CD4-positive, alpha-beta T cell (primary cell): ENCODE measurements at regions of chr5 and their contacts with region 1.

Region 1: DNA sequence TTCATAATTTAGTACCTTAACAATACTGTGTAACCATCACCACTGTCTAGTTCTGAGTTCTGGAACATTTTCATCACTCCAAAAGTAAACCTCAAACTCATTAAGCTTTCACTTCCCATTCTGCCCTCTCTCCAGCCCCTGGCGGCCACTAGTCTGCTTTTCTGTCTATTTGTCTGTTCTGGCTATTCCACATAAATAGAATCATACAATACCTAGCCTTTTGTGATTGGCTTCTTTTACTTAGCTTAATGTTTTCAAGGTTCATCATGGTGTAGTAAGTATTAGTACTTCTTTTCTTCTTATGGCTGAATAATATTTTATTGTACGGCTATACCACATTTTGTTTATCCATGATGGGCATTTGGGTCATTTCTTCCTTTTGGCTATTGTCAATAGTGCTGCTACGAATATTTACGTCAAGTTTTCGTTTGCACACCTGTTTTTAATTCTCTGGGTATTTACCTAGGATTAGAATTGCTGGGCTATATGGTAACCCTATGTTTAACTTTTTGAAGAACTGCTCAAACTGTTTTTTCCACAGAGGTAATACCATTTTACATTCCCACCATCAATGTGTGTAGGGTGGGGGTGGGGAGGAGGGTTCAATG is 138.5 kb downstream of the RAPGEF6 start:
- DNase-seq: peak in 1 of 14 experiments; percentile 9
- ATAC-seq: no peak
- H3K4me3 ChIP-seq: no peak overlapping the region
- H3K4me3 Mint-ChIP-seq: no peak overlapping the region
- H3K27ac ChIP-seq: no peak overlapping the region
- H3K27ac Mint-ChIP-seq: peak overlapping the region; percentile 64
- H3K4me1 ChIP-seq: no peaks in the 10 kb centered on the region
- H3K4me1 Mint-ChIP-seq: peaks cover 56% of the 10 kb centered on the region
- H3K27me3 ChIP-seq: no peaks in the 10 kb centered on the region
- H3K27me3 Mint-ChIP-seq: no peaks in the 10 kb centered on the region
- CTCF ChIP-seq: no peak

Region 2: GRCh38 chr5:131460867-131461572 is 35.5 kb before region 1 on chr5:
- CTCF ChIA-PET with region 1: no interaction called
- POLR2A ChIA-PET with region 1: no interaction called
- intact Hi-C with region 1: loop called in 1 of 2 experiments (anchors 5 kb)
- DNase-seq: no peak
- ATAC-seq: no peak
- H3K4me3 ChIP-seq: no peak overlapping the region
- H3K4me3 Mint-ChIP-seq: peak overlapping the region; percentile 54
- H3K27ac ChIP-seq: no peak overlapping the region
- H3K27ac Mint-ChIP-seq: peak overlapping the region; percentile 81
- H3K4me1 ChIP-seq: peaks cover 4% of the 10 kb centered on the region
- H3K4me1 Mint-ChIP-seq: peaks cover 55% of the 10 kb centered on the region
- H3K27me3 ChIP-seq: no peaks in the 10 kb centered on the region
- H3K27me3 Mint-ChIP-seq: no peaks in the 10 kb centered on the region
- CTCF ChIP-seq: no peak